Activated CD4-positive, alpha-beta T cell treated with anti-CD3 and anti-CD28 coated beads, Interleukin-2, amount 10 ng/mL, durations not matched to agents 24 days and 14 days (primary cell): ENCODE measurements at regions of chr15 and their contacts with region 1.

Region 1: GRCh38 chr15:76973362-76973743 is 21.6 kb upstream of the PSTPIP1 start:
- DNase-seq: peak; percentile 88
- H3K4me3 Mint-ChIP-seq: no peak overlapping the region
- H3K27ac Mint-ChIP-seq: peak overlapping the region; percentile 32
- H3K4me1 Mint-ChIP-seq: peaks cover 24% of the 10 kb centered on the region
- H3K27me3 Mint-ChIP-seq: peaks cover 8% of the 10 kb centered on the region

Region 2: DNA sequence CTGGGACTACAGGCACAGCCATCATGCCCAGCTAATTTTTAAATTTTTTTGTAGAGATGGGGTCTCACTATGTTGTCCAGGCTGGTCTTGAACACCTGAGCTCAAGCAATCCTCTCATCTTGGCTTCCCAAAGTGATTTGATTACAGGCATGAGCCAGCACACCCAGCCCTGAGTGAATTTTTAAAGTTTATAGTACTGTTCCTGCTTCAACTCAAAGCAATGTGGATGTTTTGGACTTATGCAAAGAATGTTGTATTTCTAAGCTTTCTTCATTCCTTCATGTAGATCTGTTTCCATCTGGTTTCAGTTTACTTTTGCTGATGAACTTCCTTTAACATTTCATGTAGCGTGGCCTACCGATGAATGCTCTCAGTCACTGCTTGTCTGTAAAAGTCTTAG is 984.4 kb before region 1 on chr15:
- intact Hi-C with region 1: no loop called
- DNase-seq: no peak
- H3K4me3 Mint-ChIP-seq: no peak overlapping the region
- H3K27ac Mint-ChIP-seq: no peak overlapping the region
- H3K4me1 Mint-ChIP-seq: no peaks in the 10 kb centered on the region
- H3K27me3 Mint-ChIP-seq: peaks cover 14% of the 10 kb centered on the region

Region 3: DNA sequence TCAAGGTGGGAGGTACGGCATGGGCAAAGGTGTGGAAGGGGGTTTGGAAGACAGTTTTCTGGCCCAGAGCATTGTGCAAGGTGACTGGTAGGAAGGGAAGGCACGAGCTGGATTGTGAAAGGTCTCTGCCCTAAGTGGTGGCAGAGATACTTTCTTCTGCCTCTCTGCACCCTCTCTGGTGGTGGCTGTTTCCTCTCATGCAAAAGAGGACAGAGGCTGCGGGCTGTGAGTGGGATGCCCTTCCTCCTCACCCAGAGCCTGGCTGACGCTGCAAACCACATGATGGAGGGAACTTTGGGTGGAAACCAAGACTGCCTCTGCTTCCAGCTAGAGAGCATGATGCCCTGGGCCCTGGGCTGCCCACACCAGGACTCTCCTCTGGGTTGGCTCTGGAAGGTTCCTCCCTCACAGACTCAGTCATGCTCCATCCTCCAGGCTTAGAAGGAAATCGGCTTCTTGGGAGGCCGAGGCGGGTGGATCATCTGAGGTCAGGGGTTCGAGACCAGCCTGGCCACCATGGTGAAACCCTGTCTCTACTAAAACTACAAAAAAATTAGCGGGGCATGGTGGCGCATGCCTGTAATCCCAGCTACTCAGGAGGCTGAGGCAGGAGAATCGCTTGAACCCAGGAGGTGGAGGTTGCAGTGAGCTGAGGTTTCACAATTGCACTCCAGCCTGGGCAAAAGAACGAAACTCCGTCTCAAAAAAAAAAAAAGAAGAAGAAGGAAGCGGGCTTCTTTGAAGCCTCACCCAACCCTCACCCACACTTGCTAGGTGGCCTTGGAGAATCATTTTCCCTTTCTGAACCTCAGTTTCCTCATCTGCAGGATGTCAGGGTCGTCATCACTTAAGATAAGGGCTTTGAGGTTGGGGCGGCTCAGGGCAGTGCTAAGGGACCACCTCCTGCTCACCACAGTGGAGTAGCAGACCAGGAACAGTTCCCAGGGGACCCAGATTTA is 29.9 kb after region 1 on chr15:
- intact Hi-C with region 1: loop called (anchors 1 kb)
- DNase-seq: peak; percentile 92
- H3K4me3 Mint-ChIP-seq: peak overlapping the region; percentile 80
- H3K27ac Mint-ChIP-seq: peak overlapping the region; percentile 92
- H3K4me1 Mint-ChIP-seq: peaks cover 81% of the 10 kb centered on the region
- H3K27me3 Mint-ChIP-seq: no peaks in the 10 kb centered on the region

Region 4: GRCh38 chr15:77024271-77025082 is 51.1 kb after region 1 on chr15:
- intact Hi-C with region 1: loop called (anchors 1 kb)
- DNase-seq: peak; percentile 91
- H3K4me3 Mint-ChIP-seq: no peak overlapping the region
- H3K27ac Mint-ChIP-seq: peak overlapping the region; percentile 98
- H3K4me1 Mint-ChIP-seq: peaks cover 52% of the 10 kb centered on the region
- H3K27me3 Mint-ChIP-seq: no peaks in the 10 kb centered on the region

Region 5: DNA sequence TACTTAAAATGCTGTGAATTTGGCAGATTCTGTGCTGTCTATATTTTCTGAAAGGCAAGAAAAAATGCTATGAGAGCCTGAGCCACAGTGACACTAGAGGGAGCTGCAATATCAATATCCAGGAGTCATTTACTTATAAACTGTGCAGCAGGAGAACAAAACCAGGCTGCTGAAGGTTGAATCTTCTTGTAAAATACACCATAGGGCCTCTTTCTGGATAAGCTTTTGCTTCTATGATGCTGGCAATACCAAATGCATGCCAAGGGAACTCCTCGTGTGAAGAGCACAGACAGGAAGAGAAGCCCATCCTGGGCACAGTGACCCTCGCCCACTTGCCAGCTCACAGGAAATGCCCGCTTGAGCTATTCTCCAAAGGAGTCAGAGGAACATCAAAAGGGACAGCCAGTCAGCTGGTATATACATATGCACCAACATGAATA is 145.5 kb after region 1 on chr15:
- intact Hi-C with region 1: loop called (anchors 5 kb)
- DNase-seq: peak; percentile 82
- H3K4me3 Mint-ChIP-seq: no peak overlapping the region
- H3K27ac Mint-ChIP-seq: no peak overlapping the region
- H3K4me1 Mint-ChIP-seq: peaks cover 14% of the 10 kb centered on the region
- H3K27me3 Mint-ChIP-seq: peaks cover 2% of the 10 kb centered on the region